ENCODE measurements at regions of chr7 and their contacts with region 1.

Region 1: GRCh38 chr7:148584154-148584827 is 6.3 kb upstream of the C7orf33 start:
- DNase-seq: no peak
- ATAC-seq: no peak
- H3K4me3 ChIP-seq: no peak overlapping the region
- H3K27ac ChIP-seq: no peak overlapping the region
- H3K4me1 ChIP-seq: no peaks in the 10 kb centered on the region
- H3K27me3 ChIP-seq: peaks cover 0 to 21% (median 5%) of the 10 kb centered on the region in 7 donors
- CTCF ChIP-seq: no peak

Region 2: DNA sequence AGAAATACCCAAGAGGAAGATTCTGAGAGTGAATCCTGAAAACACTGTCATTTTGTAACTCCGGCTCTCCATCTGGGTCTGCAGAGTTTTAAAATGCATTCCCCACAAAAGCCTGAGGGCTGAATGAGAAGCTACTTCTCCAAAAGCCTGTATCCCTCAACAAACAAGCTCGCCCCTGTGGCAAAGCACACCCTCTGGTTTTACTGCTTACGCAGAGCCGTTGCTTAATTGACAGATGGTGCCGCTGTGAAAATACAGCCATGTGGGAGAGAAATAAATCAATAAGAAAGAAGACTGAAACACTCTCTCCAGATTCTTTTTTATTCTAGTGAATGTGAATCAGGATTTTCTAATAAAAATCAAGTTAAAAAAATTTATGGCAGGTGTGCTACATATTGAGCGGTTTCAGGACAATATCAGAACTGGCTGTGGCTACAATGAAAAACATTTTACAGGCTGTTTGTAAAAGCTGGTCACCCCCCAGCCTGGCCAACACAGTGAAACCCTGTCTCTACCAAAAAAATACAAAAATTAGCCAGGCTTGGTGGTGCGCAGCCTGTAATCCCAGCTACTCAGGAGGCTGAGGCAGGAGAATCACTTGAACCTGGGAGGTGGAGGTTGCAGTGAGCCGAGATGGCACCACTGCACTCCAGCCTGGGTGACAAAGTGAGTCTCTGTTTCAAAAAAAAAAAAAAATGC is 38.7 kb after region 1 on chr7:
- intact Hi-C with region 1: no loop called
- DNase-seq: no peak
- ATAC-seq: no peak
- H3K4me3 ChIP-seq: no peak overlapping the region
- H3K27ac ChIP-seq: no peak overlapping the region
- H3K4me1 ChIP-seq: peaks cover 0 to 11% (median 0%) of the 10 kb centered on the region in 9 donors
- H3K27me3 ChIP-seq: peaks cover 0 to 24% (median 9%) of the 10 kb centered on the region in 7 donors
- CTCF ChIP-seq: no peak

Region 3: GRCh38 chr7:148856891-148857290 is 272.6 kb after region 1 on chr7:
- intact Hi-C with region 1: loop called in 1 of 10 experiments (anchors 10 kb)
- DNase-seq: no peak
- ATAC-seq: no peak
- H3K4me3 ChIP-seq: no peak overlapping the region
- H3K27ac ChIP-seq: no peak overlapping the region
- H3K4me1 ChIP-seq: peaks cover 0 to 9% (median 0%) of the 10 kb centered on the region in 9 donors
- H3K27me3 ChIP-seq: no peaks in the 10 kb centered on the region
- CTCF ChIP-seq: no peak

Measured in heart right ventricle (tissue), 16 donors.